ENCODE measurements at regions of chr13 and their contacts with region 1.

Region 1: GRCh38 chr13:62142048-62142447 is 726.4 kb upstream of the PCDH20 start:
- DNase-seq: no peak
- H3K4me3 ChIP-seq: no peak overlapping the region
- CTCF ChIP-seq: no peak

Region 2: GRCh38 chr13:62093984-62094780 is 47.9 kb before region 1 on chr13:
- in situ Hi-C with region 1: loop called (anchors 10 kb)
- DNase-seq: no peak
- H3K4me3 ChIP-seq: no peak overlapping the region
- CTCF ChIP-seq: no peak

Region 3: DNA sequence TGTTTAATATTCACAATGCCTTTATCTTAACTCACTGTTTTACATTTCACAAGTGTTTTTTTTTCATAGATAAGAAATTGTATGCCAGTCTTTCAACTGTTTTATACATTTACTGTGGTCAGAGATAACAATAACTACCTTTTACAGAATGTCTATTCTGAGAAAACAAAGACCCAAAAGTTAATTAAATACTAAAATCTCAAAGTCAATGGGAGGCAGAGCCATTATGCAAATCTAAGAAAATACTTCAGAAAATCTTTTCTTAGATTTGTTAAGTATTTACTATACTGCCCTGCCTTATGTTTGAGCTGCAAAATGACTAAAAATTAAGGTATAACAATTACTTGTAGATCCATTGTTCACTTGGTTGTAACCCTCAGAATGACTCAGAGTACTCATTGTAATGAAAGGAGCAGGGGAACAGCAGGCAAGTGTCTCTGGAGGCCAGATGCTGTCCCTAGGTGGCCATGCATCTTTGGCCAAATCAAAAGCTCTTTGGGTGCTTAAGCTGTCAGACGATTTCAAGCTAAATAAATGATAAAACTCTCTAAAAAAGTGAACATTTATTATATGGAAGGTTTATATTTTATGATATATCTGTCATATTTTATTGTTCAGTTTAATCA is 43.7 kb after region 1 on chr13:
- in situ Hi-C with region 1: no loop called
- DNase-seq: no peak
- H3K4me3 ChIP-seq: no peak overlapping the region
- CTCF ChIP-seq: no peak

Region 4: DNA sequence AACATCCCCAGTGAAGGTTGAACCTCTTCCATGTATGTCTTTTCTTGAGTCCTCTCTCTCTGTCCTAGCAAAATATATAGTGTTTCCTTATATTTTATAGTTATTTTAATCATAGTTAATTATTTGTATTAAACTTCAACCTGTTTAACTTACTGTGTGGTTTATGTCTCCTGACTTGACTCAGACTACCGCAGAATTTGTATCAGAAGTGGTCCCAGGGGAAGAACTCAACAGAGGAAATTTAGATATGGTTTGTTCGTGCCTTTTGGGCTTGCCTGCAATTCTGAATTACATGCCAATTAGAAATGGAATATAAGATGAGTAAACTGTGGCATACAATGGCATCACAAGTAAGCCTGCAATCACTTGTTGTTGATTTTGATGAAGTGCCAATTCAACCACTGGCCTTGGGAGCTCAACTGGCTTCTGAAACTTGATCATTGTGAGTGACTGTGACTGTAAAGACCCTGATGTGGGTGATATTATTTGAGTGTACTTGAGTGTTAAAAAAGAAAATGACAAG is 733.1 kb after region 1 on chr13:
- in situ Hi-C with region 1: no loop called
- DNase-seq: peak; percentile 46
- H3K4me3 ChIP-seq: no peak overlapping the region
- CTCF ChIP-seq: no peak

Measured in astrocyte of the cerebellum (primary cell).